ENCODE measurements at regions of chr1 and their contacts with region 1.

Region 1: DNA sequence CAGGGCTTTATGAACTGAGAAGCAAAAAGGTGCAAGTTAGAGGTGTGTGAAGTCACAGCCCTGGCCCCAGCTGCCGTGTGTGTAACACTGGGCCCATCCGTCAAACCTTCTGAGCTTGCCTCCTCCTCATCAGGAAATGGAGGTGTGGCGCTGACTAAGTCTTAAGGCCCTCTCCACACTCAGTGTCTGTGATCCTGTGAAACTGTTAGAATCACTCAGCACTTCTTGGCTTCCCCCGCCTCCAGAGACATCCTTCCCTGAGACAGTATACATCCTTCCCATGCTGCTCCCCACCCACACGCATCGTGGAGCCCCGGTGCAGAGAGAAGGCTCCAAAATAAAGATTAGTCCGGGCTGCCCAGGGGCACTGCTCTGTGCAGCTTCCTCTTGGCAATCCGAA is 33.3 kb downstream of the LRP8 start:
- DNase-seq: peak; percentile 4
- H3K4me3 ChIP-seq: no peak overlapping the region
- CTCF ChIP-seq: no peak

Region 2: DNA sequence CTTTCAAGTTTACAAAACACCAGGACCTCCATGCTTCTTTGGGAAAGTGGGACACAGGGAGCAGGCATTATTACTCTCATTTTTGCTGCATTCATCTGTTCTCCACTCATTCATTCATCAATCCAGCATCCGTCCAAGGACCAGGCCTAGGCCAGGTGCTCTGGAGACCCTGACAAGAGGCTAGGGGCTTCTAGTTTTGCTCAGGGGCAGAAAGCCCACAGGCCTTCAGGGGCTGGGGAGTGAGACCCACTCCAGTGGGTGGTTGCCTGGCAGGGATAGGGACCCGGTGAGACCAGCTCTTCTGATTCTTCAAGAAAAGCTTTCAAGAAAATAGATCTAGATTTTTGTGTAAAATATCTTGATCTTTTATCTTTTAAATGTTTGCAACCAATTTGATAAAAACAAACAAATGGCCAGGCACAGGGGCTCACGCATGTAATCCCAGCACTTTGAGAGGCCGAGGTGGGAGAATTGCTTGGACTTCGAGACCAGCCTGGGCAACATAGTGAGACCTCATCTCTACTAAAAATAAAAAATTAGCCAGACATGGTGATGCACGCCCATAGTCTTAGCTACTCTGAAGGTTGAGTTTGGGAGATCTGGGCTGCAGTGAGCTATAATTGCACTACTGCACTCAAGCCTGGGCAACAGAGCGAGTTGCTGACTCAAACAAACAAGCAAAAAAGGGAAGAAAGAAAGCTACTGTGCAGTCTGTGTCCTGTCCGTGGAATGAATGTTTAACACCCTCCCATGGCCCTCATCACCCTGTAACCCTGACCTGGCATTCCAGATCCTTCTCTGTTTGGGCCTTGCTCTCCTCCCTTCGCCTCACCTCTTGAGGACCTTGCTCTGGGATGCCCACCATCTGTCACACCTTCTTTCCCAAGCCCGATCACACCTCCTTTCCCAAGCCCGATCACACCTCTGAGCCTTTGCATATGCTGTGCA is 50.6 kb after region 1 on chr1:
- in situ Hi-C with region 1: loop called (anchors 5 kb)
- DNase-seq: no peak
- H3K4me3 ChIP-seq: no peak overlapping the region
- CTCF ChIP-seq: no peak

Region 3: DNA sequence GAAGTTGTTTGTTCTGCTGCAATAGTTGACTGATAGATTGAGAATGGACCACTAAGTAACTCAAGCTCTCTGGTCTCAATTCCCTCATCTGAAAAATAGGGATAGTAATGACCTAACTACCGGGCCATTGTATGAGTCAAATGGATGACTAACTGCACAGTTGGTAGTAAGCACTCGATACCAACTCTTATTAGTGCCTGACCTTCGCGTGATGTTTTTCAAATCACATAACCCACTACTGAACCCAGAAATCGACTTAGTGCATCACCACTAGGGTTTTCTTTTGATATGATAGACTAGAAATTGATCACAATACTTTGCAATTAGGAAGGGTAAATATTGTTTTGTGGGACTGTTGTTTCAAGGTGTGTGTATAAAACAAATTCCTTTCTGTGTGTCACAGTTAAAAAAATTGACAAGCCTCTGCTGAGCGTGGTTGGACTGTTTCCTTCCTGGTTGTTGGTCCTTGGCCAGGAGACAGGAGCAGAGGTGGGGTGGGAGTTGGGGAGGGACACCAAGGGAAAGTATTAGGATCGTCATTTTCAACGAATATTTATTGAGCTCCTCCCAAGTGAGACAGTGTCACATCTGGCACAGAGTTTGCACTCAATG is 87.3 kb after region 1 on chr1:
- in situ Hi-C with region 1: no loop called
- DNase-seq: no peak
- H3K4me3 ChIP-seq: no peak overlapping the region
- CTCF ChIP-seq: no peak

Region 4: DNA sequence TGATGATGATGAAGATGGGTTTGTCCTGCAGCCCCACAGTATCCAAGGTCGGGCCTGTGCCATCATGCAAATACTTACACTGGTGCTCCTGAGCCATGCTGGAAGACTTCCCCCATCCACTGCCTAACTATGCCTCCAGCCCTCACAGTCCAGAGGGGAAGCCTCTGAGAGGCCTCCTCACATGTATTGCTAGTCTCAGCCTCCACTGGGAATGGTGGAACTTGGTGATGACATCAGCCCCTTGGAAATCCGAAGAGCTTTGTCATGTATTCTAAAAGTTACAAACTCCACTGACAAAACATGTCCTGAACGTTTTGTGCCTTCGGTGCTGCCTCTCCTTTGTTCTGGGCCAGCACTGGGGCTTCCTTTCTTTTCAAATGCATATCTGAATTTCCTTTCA is 103.5 kb after region 1 on chr1:
- in situ Hi-C with region 1: loop called (anchors 5 kb)
- DNase-seq: no peak
- H3K4me3 ChIP-seq: no peak overlapping the region
- CTCF ChIP-seq: no peak

Measured in astrocyte of the cerebellum (primary cell).